ENCODE measurements at regions of chr5 and their contacts with region 1.

Region 1: GRCh38 chr5:87412630-87413342 is at the start of gene CCNH:
- DNase-seq: peak; percentile 96
- ATAC-seq: peak; percentile 99
- H3K4me3 ChIP-seq: peak within 1 kb of the TSS; percentile 72 to 98 (median 95)
- H3K27ac ChIP-seq: peak within 1 kb of the TSS; percentile 90
- H3K4me1 ChIP-seq: peaks cover 19% of the 10 kb centered on the region
- H3K27me3 ChIP-seq: no peaks in the 10 kb centered on the region; a peak in 1 of 5 replicates
- CTCF ChIP-seq: 0 out of 2 replicates have a peak, but pooled peaks have one; percentile 5
- EP300 ChIP-seq: no peak
- POLR2A ChIP-seq: peak; percentile 92 to 95
- RAD21 ChIP-seq: no peak
- total RNA-seq, gene CCNH: 94.3 and 100.0 TPM in 2 replicates

Region 2: GRCh38 chr5:87254035-87254434 is 158.8 kb before region 1 on chr5:
- CTCF ChIA-PET with region 1: no interaction called
- POLR2A ChIA-PET with region 1: no interaction called
- in situ Hi-C with region 1: no loop called
- intact Hi-C with region 1: no loop called
- DNase-seq: no peak
- ATAC-seq: no peak
- H3K4me3 ChIP-seq: no peak overlapping the region; a peak in 1 of 6 replicates
- H3K27ac ChIP-seq: no peak overlapping the region
- H3K4me1 ChIP-seq: no peaks in the 10 kb centered on the region
- H3K27me3 ChIP-seq: no peaks in the 10 kb centered on the region
- CTCF ChIP-seq: no peak
- EP300 ChIP-seq: no peak
- POLR2A ChIP-seq: no peak
- RAD21 ChIP-seq: no peak

Region 3: GRCh38 chr5:87267574-87268125 is 145.1 kb before region 1 on chr5 and contains the start of gene RASA1:
- CTCF ChIA-PET with region 1: no interaction called
- POLR2A ChIA-PET with region 1: interaction called, 17 read pairs
- in situ Hi-C with region 1: no loop called
- intact Hi-C with region 1: loop called (anchors 5 kb)
- DNase-seq: peak; percentile 91
- ATAC-seq: peak; percentile 85
- H3K4me3 ChIP-seq: peak within 1 kb of the TSS; percentile 90 to 98 (median 96)
- H3K27ac ChIP-seq: peak within 1 kb of the TSS; percentile 88
- H3K4me1 ChIP-seq: peaks cover 27% of the 10 kb centered on the region
- H3K27me3 ChIP-seq: no peaks in the 10 kb centered on the region; a peak in 1 of 5 replicates
- CTCF ChIP-seq: 0 out of 2 replicates have a peak, but pooled peaks have one; percentile 1
- EP300 ChIP-seq: no peak; a peak in 1 of 4 replicates
- POLR2A ChIP-seq: peak; percentile 73 to 92; a peak in 3 of 4 replicates
- RAD21 ChIP-seq: no peak
- total RNA-seq, gene RASA1: 19.5 and 23.4 TPM in 2 replicates

Region 4: GRCh38 chr5:88690409-88691229 is 1277.8 kb after region 1 on chr5:
- CTCF ChIA-PET with region 1: no interaction called
- POLR2A ChIA-PET with region 1: no interaction called
- in situ Hi-C with region 1: loop called (anchors 25 kb)
- intact Hi-C with region 1: no loop called
- DNase-seq: peak; percentile 7
- ATAC-seq: peak; percentile 91
- H3K4me3 ChIP-seq: no peak overlapping the region
- H3K27ac ChIP-seq: no peak overlapping the region
- H3K4me1 ChIP-seq: no peaks in the 10 kb centered on the region
- H3K27me3 ChIP-seq: peaks cover 7 to 85% of the 10 kb centered on the region in 2 experiments; a peak in 4 of 5 replicates
- CTCF ChIP-seq: peak; percentile 93
- EP300 ChIP-seq: no peak
- POLR2A ChIP-seq: no peak
- RAD21 ChIP-seq: peak; percentile 79